ENCODE measurements at regions of chr6 and their contacts with region 1.

Region 1: GRCh38 chr6:42782622-42783176 is 847 bp downstream of the BICRAL start:
- DNase-seq: peak; percentile 82 to 84 (median 84)
- ATAC-seq: peak; percentile 76
- H3K4me3 ChIP-seq: peak overlapping the region; percentile 76
- H3K4me1 ChIP-seq: peaks cover 35% of the 10 kb centered on the region
- CTCF ChIP-seq: no peak

Region 2: DNA sequence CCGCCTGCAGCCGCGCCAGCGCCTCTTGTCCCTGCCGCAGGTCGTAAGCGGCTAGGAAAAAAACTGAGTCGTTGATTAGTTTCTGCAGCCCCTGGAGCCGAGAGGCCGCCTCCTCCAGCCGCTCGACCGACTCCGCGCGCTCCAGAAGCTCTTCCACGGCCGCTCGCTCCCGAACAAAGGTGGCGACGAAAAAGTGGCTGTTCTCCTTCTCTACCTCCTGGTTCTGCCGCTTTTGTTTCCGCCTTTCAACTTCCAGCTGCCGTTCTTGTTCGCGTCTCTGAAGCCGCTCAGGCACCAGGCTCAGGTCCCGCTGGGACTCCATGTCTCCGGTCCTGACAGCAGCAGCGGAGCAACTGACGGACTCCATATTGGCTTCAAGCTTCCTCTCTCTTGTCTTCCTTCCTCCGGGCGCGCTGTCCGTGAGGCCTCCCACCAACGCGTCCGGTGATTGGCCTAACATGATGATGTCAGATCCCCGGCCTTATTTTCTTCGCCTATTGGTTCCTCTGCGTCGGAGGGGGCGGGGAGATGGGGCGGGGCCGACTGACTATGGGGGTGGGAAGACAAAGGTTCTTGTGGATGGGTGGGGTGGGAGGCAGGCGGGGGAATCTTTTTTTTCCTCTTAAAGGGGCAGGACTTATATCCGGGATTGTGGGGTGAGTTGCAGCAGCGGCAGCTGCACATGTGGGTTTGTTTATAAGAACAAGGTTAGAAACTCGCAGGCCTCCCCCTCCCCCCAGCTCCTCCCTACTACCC is 36.8 kb before region 1 on chr6 and contains the start of gene TBCC:
- intact Hi-C with region 1: loop called (anchors 5 kb)
- DNase-seq: peak; percentile 95 to 97 (median 97)
- ATAC-seq: peak; percentile 91
- H3K4me3 ChIP-seq: peak within 1 kb of the TSS; percentile 68
- H3K4me1 ChIP-seq: peaks cover 18% of the 10 kb centered on the region
- CTCF ChIP-seq: no peak
- total RNA-seq, gene TBCC: 22.6 to 35.3 (median 26.6) TPM

Region 3: DNA sequence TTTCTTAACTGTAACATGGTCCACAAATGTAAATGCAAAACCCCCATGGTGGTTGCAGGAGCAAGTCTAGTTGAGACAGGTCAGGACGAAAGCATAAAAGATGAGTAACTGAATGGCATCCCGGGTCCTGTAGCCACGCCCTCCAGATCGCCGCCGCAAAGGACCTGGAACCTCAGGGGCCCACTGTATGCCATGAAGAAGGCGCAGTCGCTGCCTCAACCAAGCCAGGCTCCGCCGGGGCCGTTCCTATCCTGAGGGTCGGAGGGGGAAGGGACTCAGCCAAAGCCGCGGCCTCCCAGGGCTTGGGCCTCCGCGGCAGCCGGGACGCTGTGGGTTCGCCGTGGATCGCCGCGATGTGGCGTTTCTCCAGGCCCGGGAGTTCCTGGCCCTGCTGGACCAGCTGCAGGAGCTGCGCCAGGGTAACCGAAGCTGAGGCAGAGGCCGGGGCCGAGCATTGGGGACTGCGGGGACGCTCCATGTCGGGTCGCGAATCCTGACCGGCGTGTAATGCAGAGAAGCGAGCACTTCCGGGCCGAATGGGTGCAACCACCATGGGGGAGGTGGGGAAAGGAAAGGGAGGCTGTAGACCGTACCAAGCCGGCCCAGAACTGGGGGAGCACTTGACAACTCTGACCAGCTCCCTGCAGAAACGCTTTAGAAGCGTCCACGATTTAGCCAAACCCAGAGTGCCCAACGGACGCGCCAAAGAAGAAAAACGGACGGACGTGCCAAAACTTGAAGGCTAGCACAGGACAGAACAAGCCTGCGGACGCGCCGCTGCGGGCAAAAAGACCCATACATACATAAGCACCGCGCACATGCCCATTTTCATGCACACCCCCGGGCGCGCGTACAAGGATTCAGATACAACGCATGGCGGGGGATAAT is 107.9 kb after region 1 on chr6:
- intact Hi-C with region 1: no loop called
- DNase-seq: peak; percentile 94 to 96 (median 94)
- ATAC-seq: peak; percentile 99
- H3K4me3 ChIP-seq: peak overlapping the region; percentile 99
- H3K4me1 ChIP-seq: peaks cover 6% of the 10 kb centered on the region
- CTCF ChIP-seq: no peak

Measured in mucosa of descending colon (tissue), 3 donors.